Naive thymus-derived CD4-positive, alpha-beta T cell (primary cell): ENCODE measurements at regions of chr11 and their contacts with region 1.

Region 1: DNA sequence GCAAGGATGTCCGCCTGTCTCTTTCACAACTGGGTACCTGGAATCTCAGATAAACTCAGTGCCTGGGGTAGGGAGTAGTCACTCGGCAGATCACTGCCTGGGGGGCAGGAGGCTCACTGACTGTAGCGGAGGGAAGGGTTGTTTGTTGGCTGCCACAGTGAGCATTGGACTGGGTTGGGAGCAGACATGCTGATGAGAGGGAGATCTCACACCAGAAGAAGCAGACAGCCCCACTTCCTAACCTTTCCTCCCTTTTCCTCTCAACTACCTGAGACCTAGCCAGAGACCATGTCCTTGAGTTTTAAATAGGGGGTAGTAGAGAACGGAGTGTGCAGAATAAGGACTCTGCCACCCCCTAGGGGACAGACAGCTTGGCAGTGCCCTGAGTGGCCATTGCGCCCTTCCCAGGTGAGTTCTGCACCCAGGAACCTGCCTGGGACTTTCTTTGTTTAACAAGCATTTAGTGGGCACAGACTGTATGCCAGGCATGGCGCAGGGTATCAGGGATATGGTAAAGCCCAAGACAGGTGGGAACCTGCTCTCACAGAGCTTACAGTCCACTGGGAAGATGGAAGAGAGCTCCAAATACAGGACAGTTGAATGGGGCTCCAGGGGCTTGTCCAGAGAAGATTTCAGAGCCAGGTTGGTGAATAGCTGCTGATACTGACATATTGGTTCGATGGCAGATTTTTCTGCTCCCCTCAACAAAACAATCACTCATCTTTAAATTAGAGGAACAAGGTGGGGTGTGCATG is 115.7 kb upstream of the NNMT start:
- DNase-seq: peak in 1 of 9 donors; percentile 28
- ATAC-seq: peak; percentile 47
- H3K4me3 ChIP-seq: peak overlapping the region; percentile 12
- H3K4me3 Mint-ChIP-seq: peak overlapping the region in 7 of 10 donors; percentile 26 to 75 (median 63)
- H3K27ac ChIP-seq: no peak overlapping the region
- H3K27ac Mint-ChIP-seq: peak overlapping the region in 7 of 9 donors; percentile 46 to 96 (median 85)
- H3K4me1 ChIP-seq: peaks cover 48 to 74% of the 10 kb centered on the region in 2 donors
- H3K4me1 Mint-ChIP-seq: peaks cover 54 to 98% (median 83%) of the 10 kb centered on the region in 7 donors
- H3K27me3 ChIP-seq: no peaks in the 10 kb centered on the region
- H3K27me3 Mint-ChIP-seq: peaks cover 0 to under 1% (median 0%) of the 10 kb centered on the region in 5 donors

Region 2: GRCh38 chr11:113875234-113876073 is 305.0 kb before region 1 on chr11 and contains the start of gene USP28:
- CTCF ChIA-PET with region 1: no interaction called
- POLR2A ChIA-PET with region 1: no interaction called
- intact Hi-C with region 1: loop called in 1 of 2 experiments (anchors 10 kb)
- DNase-seq: peak; percentile 49 to 92 (median 73)
- ATAC-seq: peak; percentile 97
- H3K4me3 ChIP-seq: peak within 1 kb of the TSS; percentile 79
- H3K4me3 Mint-ChIP-seq: peak within 1 kb of the TSS; percentile 88 to 100 (median 98)
- H3K27ac ChIP-seq: peak within 1 kb of the TSS; percentile 78
- H3K27ac Mint-ChIP-seq: peak within 1 kb of the TSS; percentile 91 to 99 (median 98)
- H3K4me1 ChIP-seq: no peaks in the 10 kb centered on the region
- H3K4me1 Mint-ChIP-seq: peaks cover 34 to 59% (median 54%) of the 10 kb centered on the region in 7 donors
- H3K27me3 ChIP-seq: no peaks in the 10 kb centered on the region
- H3K27me3 Mint-ChIP-seq: no peaks in the 10 kb centered on the region
- total RNA-seq, gene USP28: 12.0 to 50.3 (median 19.0) TPM

Region 3: GRCh38 chr11:114075891-114076441 is 104.5 kb before region 1 on chr11:
- CTCF ChIA-PET with region 1: no interaction called
- POLR2A ChIA-PET with region 1: interaction called, 3 read pairs
- intact Hi-C with region 1: loop called in 1 of 2 experiments (anchors 5 kb)
- DNase-seq: peak in 6 of 9 donors; percentile 32 to 48 (median 36)
- ATAC-seq: peak; percentile 40
- H3K4me3 ChIP-seq: no peak overlapping the region
- H3K4me3 Mint-ChIP-seq: peak overlapping the region in 7 of 10 donors; percentile 20 to 57 (median 43)
- H3K27ac ChIP-seq: no peak overlapping the region
- H3K27ac Mint-ChIP-seq: peak overlapping the region in 3 of 9 donors; percentile 5 to 24 (median 20)
- H3K4me1 ChIP-seq: peaks cover 32 to 68% of the 10 kb centered on the region in 2 donors
- H3K4me1 Mint-ChIP-seq: peaks cover 29 to 79% (median 59%) of the 10 kb centered on the region in 7 donors
- H3K27me3 ChIP-seq: no peaks in the 10 kb centered on the region
- H3K27me3 Mint-ChIP-seq: peaks cover 0 to 44% (median 0%) of the 10 kb centered on the region in 5 donors

Region 4: GRCh38 chr11:114085965-114086793 is 94.3 kb before region 1 on chr11:
- CTCF ChIA-PET with region 1: no interaction called
- POLR2A ChIA-PET with region 1: no interaction called
- intact Hi-C with region 1: no loop called
- DNase-seq: no peak
- ATAC-seq: no peak
- H3K4me3 ChIP-seq: no peak overlapping the region
- H3K4me3 Mint-ChIP-seq: no peak overlapping the region
- H3K27ac ChIP-seq: no peak overlapping the region
- H3K27ac Mint-ChIP-seq: peak overlapping the region in 2 of 9 donors; percentile 15 to 51
- H3K4me1 ChIP-seq: peaks cover 6 to 10% of the 10 kb centered on the region in 2 donors
- H3K4me1 Mint-ChIP-seq: peaks cover 14 to 64% (median 26%) of the 10 kb centered on the region in 7 donors
- H3K27me3 ChIP-seq: no peaks in the 10 kb centered on the region
- H3K27me3 Mint-ChIP-seq: peaks cover 0 to 30% (median 6%) of the 10 kb centered on the region in 5 donors

Region 5: GRCh38 chr11:114192841-114193389 is 12.4 kb after region 1 on chr11:
- CTCF ChIA-PET with region 1: interaction called, 68 read pairs
- POLR2A ChIA-PET with region 1: interaction called, 363 read pairs
- intact Hi-C with region 1: loop called in 1 of 2 experiments (anchors 1 kb)
- DNase-seq: no peak
- ATAC-seq: no peak
- H3K4me3 ChIP-seq: no peak overlapping the region
- H3K4me3 Mint-ChIP-seq: no peak overlapping the region
- H3K27ac ChIP-seq: no peak overlapping the region
- H3K27ac Mint-ChIP-seq: peak overlapping the region in 5 of 9 donors; percentile 16 to 54 (median 39)
- H3K4me1 ChIP-seq: peaks cover 3 to 8% of the 10 kb centered on the region in 2 donors
- H3K4me1 Mint-ChIP-seq: peaks cover 11 to 57% (median 37%) of the 10 kb centered on the region in 7 donors
- H3K27me3 ChIP-seq: no peaks in the 10 kb centered on the region
- H3K27me3 Mint-ChIP-seq: peaks cover 0 to 3% (median 0%) of the 10 kb centered on the region in 5 donors

Region 6: GRCh38 chr11:114208377-114208776 is 27.9 kb after region 1 on chr11:
- CTCF ChIA-PET with region 1: no interaction called
- POLR2A ChIA-PET with region 1: no interaction called
- intact Hi-C with region 1: no loop called
- DNase-seq: peak in 6 of 9 donors; percentile 16 to 41 (median 38)
- ATAC-seq: peak; percentile 92
- H3K4me3 ChIP-seq: no peak overlapping the region
- H3K4me3 Mint-ChIP-seq: peak overlapping the region in 7 of 10 donors; percentile 2 to 32 (median 22)
- H3K27ac ChIP-seq: no peak overlapping the region
- H3K27ac Mint-ChIP-seq: peak overlapping the region in 6 of 9 donors; percentile 1 to 69 (median 33)
- H3K4me1 ChIP-seq: peaks cover 14 to 16% of the 10 kb centered on the region in 2 donors
- H3K4me1 Mint-ChIP-seq: peaks cover 19 to 45% (median 30%) of the 10 kb centered on the region in 7 donors
- H3K27me3 ChIP-seq: no peaks in the 10 kb centered on the region
- H3K27me3 Mint-ChIP-seq: peaks cover 0 to 4% (median 0%) of the 10 kb centered on the region in 5 donors

Region 7: DNA sequence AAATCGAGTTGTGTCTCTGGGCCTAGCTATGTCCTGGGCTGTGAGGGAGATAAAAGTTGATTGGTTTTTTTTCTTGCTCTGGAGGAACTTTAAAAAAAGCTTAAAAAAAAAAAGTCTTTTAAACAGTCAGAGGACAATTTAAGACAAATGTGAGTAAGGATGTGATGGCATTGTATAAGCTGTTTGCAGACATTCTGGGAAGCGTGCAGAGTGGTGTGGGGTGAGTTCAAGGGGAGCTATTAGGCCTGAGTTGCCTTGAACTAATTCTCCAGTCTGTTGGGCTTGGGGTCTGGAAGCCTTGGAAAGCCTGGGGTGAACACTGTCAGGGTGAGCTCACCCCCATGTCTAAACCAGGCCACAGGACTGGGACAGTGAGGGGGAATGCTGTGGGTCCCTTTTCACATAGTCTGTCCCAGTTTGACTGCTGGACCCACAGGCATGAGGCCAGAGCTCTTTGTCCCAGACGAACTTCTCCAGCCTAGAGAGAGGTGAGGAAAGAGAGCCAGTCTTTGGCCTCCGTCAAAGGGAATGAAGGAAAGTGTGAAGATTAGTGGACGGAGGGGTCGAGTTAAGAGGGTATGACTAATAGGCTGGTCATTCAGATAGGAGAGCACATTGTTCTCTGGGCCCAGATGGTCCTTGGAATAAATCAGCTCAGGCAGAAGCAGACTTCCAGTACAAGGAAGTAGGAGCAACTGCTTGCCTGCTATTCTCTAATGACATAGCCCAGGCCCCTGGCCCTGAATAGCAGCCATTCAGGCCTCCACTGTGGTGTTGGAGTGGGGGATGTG is 39.3 kb after region 1 on chr11:
- CTCF ChIA-PET with region 1: no interaction called
- POLR2A ChIA-PET with region 1: interaction called, 3 read pairs
- intact Hi-C with region 1: loop called in 1 of 2 experiments (anchors 5 kb)
- DNase-seq: no peak
- ATAC-seq: no peak
- H3K4me3 ChIP-seq: no peak overlapping the region
- H3K4me3 Mint-ChIP-seq: no peak overlapping the region
- H3K27ac ChIP-seq: no peak overlapping the region
- H3K27ac Mint-ChIP-seq: no peak overlapping the region
- H3K4me1 ChIP-seq: peaks cover 0 to 19% of the 10 kb centered on the region in 2 donors
- H3K4me1 Mint-ChIP-seq: peaks cover 14 to 40% (median 25%) of the 10 kb centered on the region in 7 donors
- H3K27me3 ChIP-seq: no peaks in the 10 kb centered on the region
- H3K27me3 Mint-ChIP-seq: peaks cover 0 to 14% (median 0%) of the 10 kb centered on the region in 5 donors

Region 8: GRCh38 chr11:114400217-114400914 is 219.9 kb after region 1 on chr11 and contains the starts of genes C11orf71 and RBM7:
- CTCF ChIA-PET with region 1: no interaction called
- POLR2A ChIA-PET with region 1: no interaction called
- intact Hi-C with region 1: no loop called
- DNase-seq: peak; percentile 94 to 97 (median 95)
- ATAC-seq: peak; percentile 96
- H3K4me3 ChIP-seq: peak within 1 kb of the TSS; percentile 93
- H3K4me3 Mint-ChIP-seq: peak within 1 kb of the TSS; percentile 89 to 99 (median 97)
- H3K27ac ChIP-seq: peak within 1 kb of the TSS; percentile 96
- H3K27ac Mint-ChIP-seq: peak within 1 kb of the TSS; percentile 96 to 100 (median 99)
- H3K4me1 ChIP-seq: peaks cover 25% of the 10 kb centered on the region in 2 donors
- H3K4me1 Mint-ChIP-seq: peaks cover 33 to 77% (median 68%) of the 10 kb centered on the region in 7 donors
- H3K27me3 ChIP-seq: no peaks in the 10 kb centered on the region
- H3K27me3 Mint-ChIP-seq: no peaks in the 10 kb centered on the region
- total RNA-seq, gene C11orf71: 6.0 to 19.1 (median 17.1) TPM
- total RNA-seq, gene RBM7: 35.8 to 71.3 (median 43.4) TPM